ENCODE measurements at regions of chr16 and their contacts with region 1.

Region 1: DNA sequence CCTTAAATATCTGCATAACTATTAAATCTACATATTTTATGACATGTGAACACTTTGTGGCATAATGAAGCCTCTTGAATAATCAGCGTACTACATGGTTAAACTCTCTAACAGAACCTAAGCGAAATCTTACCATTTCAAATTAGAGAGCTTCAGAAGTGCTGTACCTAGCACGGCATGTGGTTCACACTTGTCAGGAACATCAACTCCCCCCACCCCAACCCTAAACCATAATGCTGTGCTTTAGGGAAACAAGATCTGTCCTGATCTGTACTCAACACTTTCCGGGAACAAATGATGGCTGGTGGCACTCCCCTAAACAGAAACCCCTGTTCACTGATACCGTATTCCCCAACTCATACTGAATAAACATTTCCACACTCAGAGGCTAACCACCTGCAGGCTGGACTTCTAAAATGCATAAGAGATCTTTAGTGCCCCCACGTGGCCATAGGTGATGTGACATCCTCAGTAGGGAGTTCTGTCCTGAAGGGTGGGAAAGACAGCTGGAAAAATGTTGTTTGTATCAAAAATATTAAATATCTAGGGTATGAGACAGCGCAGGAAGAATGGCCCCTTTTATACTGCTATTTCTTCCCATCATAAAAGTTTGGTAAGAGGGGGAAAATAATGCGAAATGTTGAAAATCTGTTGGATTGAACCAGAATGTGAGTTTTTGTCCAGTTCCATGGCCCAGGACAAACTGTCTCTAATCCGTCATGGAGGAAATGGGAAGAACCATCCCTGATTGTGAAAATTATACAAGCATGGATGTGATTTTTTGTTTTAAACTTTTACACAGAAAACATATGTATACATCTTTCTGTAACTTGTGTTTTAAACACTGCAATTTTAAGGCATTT is 88.6 kb downstream of the USP31 start:
- DNase-seq: peak; percentile 75
- H3K4me3 Mint-ChIP-seq: no peak overlapping the region
- H3K27ac Mint-ChIP-seq: no peak overlapping the region
- H3K4me1 Mint-ChIP-seq: peaks cover 1% of the 10 kb centered on the region
- H3K27me3 Mint-ChIP-seq: peaks cover 11% of the 10 kb centered on the region
- CTCF ChIP-seq: peak; percentile 60

Region 2: DNA sequence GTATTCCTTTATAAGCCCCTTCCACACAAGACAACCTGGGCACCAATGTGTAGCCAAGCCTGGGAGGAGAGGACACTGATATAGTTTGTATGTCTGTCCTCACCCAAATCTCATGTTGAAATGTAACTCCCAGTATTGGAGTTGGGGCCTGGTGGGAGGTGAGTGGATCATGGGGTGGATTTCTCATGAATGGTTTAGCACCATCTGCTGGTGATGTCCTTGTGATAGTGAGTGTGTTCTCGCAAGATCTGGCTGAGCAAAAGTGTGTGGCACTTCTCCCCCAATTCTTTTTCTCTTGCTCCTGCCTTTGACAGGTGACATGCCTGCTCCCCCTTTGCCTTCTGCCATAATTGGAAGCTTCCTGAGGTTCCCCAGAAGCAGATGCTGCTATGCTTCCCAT is 47.2 kb before region 1 on chr16:
- CTCF ChIA-PET with region 1: no interaction called
- POLR2A ChIA-PET with region 1: no interaction called
- intact Hi-C with region 1: no loop called
- DNase-seq: peak; percentile 10
- H3K4me3 Mint-ChIP-seq: no peak overlapping the region
- H3K27ac Mint-ChIP-seq: no peak overlapping the region
- H3K4me1 Mint-ChIP-seq: no peaks in the 10 kb centered on the region
- H3K27me3 Mint-ChIP-seq: peaks cover 40% of the 10 kb centered on the region
- CTCF ChIP-seq: peak; percentile 15

Region 3: GRCh38 chr16:23072084-23072599 is 11.5 kb after region 1 on chr16:
- CTCF ChIA-PET with region 1: interaction called, 18 read pairs
- POLR2A ChIA-PET with region 1: interaction called, 3 read pairs
- intact Hi-C with region 1: no loop called
- DNase-seq: peak; percentile 64
- H3K4me3 Mint-ChIP-seq: peak overlapping the region; percentile 44
- H3K27ac Mint-ChIP-seq: peak overlapping the region; percentile 82
- H3K4me1 Mint-ChIP-seq: peaks cover 19% of the 10 kb centered on the region
- H3K27me3 Mint-ChIP-seq: no peaks in the 10 kb centered on the region
- CTCF ChIP-seq: no peak